B cell (primary cell): ENCODE measurements at regions of chr12 and their contacts with region 1.

Region 1: DNA sequence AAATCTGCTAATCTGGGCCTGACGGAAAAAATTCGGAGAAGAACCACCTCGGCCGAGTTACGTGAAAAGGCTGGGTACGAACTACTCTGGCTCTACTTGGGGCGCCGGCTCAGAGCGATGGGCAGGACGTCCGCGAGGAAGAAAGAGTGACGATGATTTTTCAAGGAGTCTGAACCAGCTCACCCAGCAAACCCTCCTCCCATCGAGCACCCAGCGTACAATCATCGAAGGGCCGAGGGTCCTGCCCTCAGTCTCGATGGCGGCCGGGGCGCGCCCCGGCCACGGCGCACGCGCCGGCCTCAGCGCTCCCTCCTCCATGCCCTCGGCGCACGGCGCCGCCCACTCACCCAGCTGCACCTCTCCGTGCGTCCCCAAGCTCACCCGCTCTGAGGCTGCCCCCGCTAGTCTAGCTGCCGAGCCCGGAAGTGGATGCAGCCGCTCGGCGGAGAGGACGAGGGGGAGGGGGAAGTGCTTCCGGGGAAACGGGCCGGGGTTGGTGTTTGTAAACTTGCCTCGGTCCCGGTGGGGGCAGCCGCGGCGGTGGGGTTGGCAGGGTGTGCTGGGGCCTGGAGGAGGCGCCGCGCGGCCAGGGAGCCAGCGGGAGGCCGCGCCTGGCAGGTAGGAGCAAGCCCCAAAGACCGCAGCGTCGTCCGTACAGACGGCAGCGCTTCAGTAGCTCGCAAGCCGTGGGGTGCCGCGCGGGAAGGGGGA is at the starts of genes CSAD and ZNF740:
- DNase-seq: peak; percentile 98
- ATAC-seq: peak; percentile 93
- H3K4me3 ChIP-seq: peak within 1 kb of the TSS; percentile 81 to 92 (median 86)
- H3K4me3 Mint-ChIP-seq: peak within 1 kb of the TSS; percentile 95
- H3K27ac ChIP-seq: peak within 1 kb of the TSS; percentile 87 to 89
- H3K27ac Mint-ChIP-seq: peak within 1 kb of the TSS; percentile 95
- H3K4me1 ChIP-seq: peaks cover 28 to 38% of the 10 kb centered on the region in 2 donors
- H3K4me1 Mint-ChIP-seq: peaks cover 52% of the 10 kb centered on the region
- H3K27me3 ChIP-seq: no peaks in the 10 kb centered on the region
- H3K27me3 Mint-ChIP-seq: no peaks in the 10 kb centered on the region
- CTCF ChIP-seq: no peak
- total RNA-seq, gene CSAD: 56.3 and 57.0 TPM in 2 replicates
- total RNA-seq, gene ZNF740: 117 and 131 TPM in 2 replicates

Region 2: GRCh38 chr12:53005986-53006809 is 174.2 kb before region 1 on chr12 and contains the start of gene EIF4B:
- CTCF ChIA-PET with region 1: no interaction called
- POLR2A ChIA-PET with region 1: interaction called, 4 read pairs
- intact Hi-C with region 1: loop called (anchors 1 kb)
- DNase-seq: peak; percentile 100
- ATAC-seq: peak; percentile 91
- H3K4me3 ChIP-seq: peak within 1 kb of the TSS; percentile 72 to 100 (median 82)
- H3K4me3 Mint-ChIP-seq: peak within 1 kb of the TSS; percentile 98
- H3K27ac ChIP-seq: peak within 1 kb of the TSS; percentile 79 to 92
- H3K27ac Mint-ChIP-seq: peak within 1 kb of the TSS; percentile 98
- H3K4me1 ChIP-seq: peaks cover 38 to 46% of the 10 kb centered on the region in 2 donors
- H3K4me1 Mint-ChIP-seq: peaks cover 44% of the 10 kb centered on the region
- H3K27me3 ChIP-seq: no peaks in the 10 kb centered on the region
- H3K27me3 Mint-ChIP-seq: no peaks in the 10 kb centered on the region
- CTCF ChIP-seq: no peak
- total RNA-seq, gene EIF4B: 631 and 674 TPM in 2 replicates

Region 3: DNA sequence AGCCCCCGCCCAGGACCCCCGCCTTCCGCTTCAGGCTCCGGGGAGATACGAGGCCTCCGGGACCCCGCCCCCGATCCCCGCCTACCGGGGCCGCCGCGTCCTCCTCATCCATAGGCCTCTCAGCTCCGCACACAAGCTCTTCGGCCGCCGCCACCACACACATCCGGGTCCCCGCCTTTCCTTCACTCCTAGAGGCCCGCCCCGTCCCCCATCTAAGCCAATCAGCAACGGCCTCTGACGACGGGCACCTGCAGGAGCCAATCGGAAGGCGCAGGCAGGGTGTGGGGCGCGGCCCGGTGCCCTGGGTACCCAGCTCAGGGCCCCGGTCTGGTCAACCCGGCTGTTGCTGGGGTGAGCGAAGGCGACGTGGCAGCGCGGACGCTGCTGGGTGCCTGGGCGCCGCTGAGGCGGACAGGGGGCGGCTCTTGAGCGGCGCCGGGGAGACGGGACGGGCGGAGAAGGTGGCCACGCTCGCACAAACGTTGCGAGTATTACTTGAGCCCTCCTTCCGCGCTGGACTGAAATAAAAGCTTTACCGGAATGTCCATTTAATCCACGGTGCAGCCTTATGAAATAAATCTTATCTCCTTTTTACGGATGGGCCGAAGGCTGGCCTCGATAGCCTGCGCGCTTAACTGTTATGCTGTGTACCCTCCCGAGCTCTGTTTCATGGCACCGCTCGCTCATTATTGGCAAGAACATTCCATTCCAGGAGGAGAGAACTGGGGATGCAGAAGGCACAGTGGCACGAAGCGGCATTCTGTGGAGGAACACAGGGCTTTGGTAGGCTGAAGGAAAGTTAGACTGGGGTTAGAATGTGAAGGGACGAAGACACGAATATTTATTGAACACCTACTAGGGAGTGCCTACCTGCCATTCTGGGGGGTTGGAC is 100.9 kb before region 1 on chr12 and contains the start of gene SPRYD3:
- CTCF ChIA-PET with region 1: interaction called, 5 read pairs
- POLR2A ChIA-PET with region 1: no interaction called
- intact Hi-C with region 1: loop called (anchors 1 kb)
- DNase-seq: peak; percentile 97
- ATAC-seq: peak; percentile 98
- H3K4me3 ChIP-seq: peak within 1 kb of the TSS; percentile 65 to 98 (median 80)
- H3K4me3 Mint-ChIP-seq: peak within 1 kb of the TSS; percentile 95
- H3K27ac ChIP-seq: peak within 1 kb of the TSS; percentile 51 to 75
- H3K27ac Mint-ChIP-seq: peak within 1 kb of the TSS; percentile 95
- H3K4me1 ChIP-seq: peaks cover 10 to 17% of the 10 kb centered on the region in 2 donors
- H3K4me1 Mint-ChIP-seq: peaks cover 28% of the 10 kb centered on the region
- H3K27me3 ChIP-seq: peaks cover 0 to 8% (median 0%) of the 10 kb centered on the region in 4 experiments
- H3K27me3 Mint-ChIP-seq: peaks cover 4% of the 10 kb centered on the region
- CTCF ChIP-seq: no peak
- total RNA-seq, gene SPRYD3: 39.8 and 43.3 TPM in 2 replicates

Region 4: DNA sequence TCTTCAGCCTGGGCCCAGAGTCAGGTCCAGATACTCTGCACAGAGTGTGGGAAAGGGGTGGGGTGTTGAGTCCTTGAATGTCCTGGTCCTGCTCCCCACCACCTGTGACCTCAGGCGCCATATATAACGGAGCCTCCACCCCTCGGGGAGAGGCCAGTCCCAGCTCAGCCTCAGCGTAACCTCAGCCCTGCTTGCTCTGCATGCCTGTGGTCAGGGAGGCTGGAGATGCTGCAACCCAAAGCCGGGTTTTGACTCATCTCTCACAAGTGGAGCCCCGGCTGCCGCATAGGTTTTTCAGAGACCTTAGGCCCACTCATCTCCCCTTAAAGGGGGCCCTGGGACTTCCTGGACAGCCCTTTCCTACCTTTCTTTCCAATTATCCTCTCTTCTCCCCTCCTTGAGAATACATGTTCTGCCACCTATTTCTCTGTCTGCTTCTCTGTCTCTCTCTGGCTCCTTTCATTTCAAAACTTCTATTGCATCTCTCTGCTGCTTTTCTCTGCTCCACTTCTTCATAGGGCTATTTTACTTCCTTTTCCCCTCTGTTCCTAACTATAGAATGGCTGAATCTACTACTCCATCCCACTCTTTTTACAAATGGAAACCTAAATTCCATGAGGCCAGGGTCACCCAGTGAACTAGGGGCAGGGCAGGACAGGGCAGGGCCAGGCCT is 25.5 kb after region 1 on chr12:
- CTCF ChIA-PET with region 1: interaction called, 56 read pairs
- POLR2A ChIA-PET with region 1: interaction called, 7 read pairs
- intact Hi-C with region 1: loop called (anchors 2 kb)
- DNase-seq: peak; percentile 40
- ATAC-seq: peak; percentile 53
- H3K4me3 ChIP-seq: peak overlapping the region; percentile 68 to 90 (median 73)
- H3K4me3 Mint-ChIP-seq: peak overlapping the region; percentile 82
- H3K27ac ChIP-seq: peak overlapping the region; percentile 65 to 91
- H3K27ac Mint-ChIP-seq: peak overlapping the region; percentile 81
- H3K4me1 ChIP-seq: peaks cover 95 to 99% of the 10 kb centered on the region in 2 donors
- H3K4me1 Mint-ChIP-seq: peaks cover 74% of the 10 kb centered on the region
- H3K27me3 ChIP-seq: no peaks in the 10 kb centered on the region
- H3K27me3 Mint-ChIP-seq: no peaks in the 10 kb centered on the region
- CTCF ChIP-seq: no peak

Region 5: DNA sequence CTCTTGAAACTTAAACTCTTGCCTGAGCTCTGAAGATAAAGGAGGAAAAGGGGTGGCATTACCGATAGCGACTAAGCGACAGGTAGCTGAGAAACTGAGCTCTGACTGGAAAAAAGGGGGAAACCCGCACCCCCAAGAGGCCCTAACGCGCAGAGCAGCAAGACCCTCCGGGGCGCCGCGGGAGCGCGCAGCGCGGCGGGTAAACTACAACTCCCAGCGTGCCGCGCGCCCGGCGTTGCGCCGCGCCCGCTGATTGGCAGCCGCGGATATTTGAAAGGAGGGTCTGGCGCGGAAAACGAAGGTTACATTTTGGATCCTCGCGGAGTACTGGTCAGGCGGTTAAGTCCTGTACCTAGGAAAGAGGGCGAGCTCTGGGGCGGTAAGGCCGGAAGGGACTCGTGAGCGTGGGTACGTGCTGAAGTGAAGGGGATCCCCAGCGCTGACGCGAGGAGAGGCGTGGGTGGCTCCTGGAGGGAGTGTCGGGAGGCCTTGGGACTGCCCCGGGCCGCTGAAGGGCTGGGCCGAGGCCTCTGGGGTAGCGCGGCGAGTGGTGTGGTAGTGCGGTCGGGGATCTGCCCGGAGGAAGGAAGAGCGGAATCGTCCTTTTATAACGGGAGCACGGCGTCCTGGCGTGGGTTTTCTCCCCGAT is 87.7 kb after region 1 on chr12 and contains the start of gene ESPL1:
- CTCF ChIA-PET with region 1: interaction called, 25 read pairs
- POLR2A ChIA-PET with region 1: interaction called, 11 read pairs
- intact Hi-C with region 1: loop called (anchors 1 kb)
- DNase-seq: peak; percentile 92
- ATAC-seq: peak; percentile 93
- H3K4me3 ChIP-seq: peak within 1 kb of the TSS; percentile 63 to 90 (median 70)
- H3K4me3 Mint-ChIP-seq: peak within 1 kb of the TSS; percentile 97
- H3K27ac ChIP-seq: peak within 1 kb of the TSS; percentile 68 to 92
- H3K27ac Mint-ChIP-seq: peak within 1 kb of the TSS; percentile 87
- H3K4me1 ChIP-seq: peaks cover 13 to 20% of the 10 kb centered on the region in 2 donors
- H3K4me1 Mint-ChIP-seq: peaks cover 21% of the 10 kb centered on the region
- H3K27me3 ChIP-seq: no peaks in the 10 kb centered on the region
- H3K27me3 Mint-ChIP-seq: no peaks in the 10 kb centered on the region
- CTCF ChIP-seq: peak; percentile 49
- total RNA-seq, gene ESPL1: 1.7 and 2.4 TPM in 2 replicates

Region 6: DNA sequence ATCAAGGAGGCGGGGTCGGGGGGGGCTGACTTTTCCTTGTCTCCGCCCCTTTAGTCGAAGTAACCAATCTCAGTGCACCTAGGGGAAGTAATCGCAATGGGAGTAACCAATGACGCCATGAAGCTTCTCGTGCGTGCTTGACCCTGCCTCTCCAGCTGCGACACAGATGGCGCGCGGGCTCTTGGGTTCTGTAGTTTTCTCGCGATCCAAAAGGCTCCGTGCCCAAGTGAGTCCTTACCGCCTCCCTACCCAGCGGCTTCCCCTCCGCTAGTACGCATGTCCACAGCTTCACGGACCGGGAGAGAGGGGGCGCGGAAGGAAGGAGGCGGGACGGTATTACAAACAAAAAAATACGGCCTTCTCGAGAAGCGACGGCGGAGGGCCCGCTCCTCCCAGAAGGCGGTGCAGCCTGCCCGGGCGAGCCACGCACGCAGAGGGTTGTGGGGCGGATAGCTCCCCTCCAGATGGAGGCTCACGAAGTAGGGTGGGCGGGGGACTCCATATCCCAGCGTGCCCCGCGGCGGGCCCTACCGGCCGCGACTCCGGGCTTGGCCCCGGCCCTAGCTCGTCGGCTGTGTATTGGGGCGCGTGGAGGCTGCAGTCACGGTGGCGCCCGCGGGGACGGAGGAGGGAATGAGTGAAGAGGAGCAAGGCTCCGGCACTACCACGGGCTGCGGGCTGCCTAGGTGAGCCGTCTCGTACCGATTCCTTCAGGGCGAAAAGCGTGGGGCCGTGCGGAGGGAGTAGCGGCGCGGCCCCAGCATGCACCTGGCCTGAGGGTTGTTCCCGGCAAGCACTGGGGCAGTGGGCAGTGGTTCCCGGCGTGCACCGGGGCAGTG is 320.6 kb after region 1 on chr12 and contains the start of gene TARBP2:
- CTCF ChIA-PET with region 1: no interaction called
- POLR2A ChIA-PET with region 1: no interaction called
- intact Hi-C with region 1: loop called (anchors 2 kb)
- DNase-seq: peak; percentile 99
- ATAC-seq: peak; percentile 79
- H3K4me3 ChIP-seq: peak within 1 kb of the TSS; percentile 65 to 94 (median 76)
- H3K4me3 Mint-ChIP-seq: peak within 1 kb of the TSS; percentile 92
- H3K27ac ChIP-seq: peak within 1 kb of the TSS; percentile 95 to 97
- H3K27ac Mint-ChIP-seq: peak within 1 kb of the TSS; percentile 97
- H3K4me1 ChIP-seq: peaks cover 22 to 28% of the 10 kb centered on the region in 2 donors
- H3K4me1 Mint-ChIP-seq: peaks cover 29% of the 10 kb centered on the region
- H3K27me3 ChIP-seq: no peaks in the 10 kb centered on the region
- H3K27me3 Mint-ChIP-seq: no peaks in the 10 kb centered on the region
- CTCF ChIP-seq: no peak
- total RNA-seq, gene TARBP2: 36.3 and 41.6 TPM in 2 replicates